OCI-LY7 (cell line): ENCODE measurements at regions of chr10 and their contacts with region 1.

Region 1: DNA sequence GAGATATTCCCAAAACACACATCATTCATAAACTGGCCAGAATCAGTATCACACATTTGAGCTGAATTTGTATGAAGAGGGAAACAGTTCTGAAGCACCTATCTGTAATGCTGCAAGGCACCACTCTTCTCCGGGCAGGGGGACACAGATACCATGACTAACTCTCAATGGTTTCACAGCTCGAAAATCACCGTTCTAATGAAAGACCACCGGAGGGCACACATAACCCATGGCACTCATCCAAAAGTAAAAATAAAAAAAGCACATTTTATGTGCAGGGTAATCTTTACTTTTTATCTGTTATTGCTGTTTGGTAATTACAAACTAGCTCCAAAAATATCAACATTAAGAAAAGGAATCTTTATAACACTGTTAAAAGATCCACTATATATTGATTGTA is 137.5 kb downstream of the PARD3 start:
- DNase-seq: no peak
- H3K4me3 ChIP-seq: no peak overlapping the region
- H3K27ac ChIP-seq: no peak overlapping the region
- H3K4me1 ChIP-seq: no peaks in the 10 kb centered on the region
- CTCF ChIP-seq: peak; percentile 37; the same call in 1 of the 2 replicates

Region 2: GRCh38 chr10:34655286-34656170 is 22.1 kb before region 1 on chr10:
- CTCF ChIA-PET with region 1: no interaction called
- POLR2A ChIA-PET with region 1: no interaction called
- intact Hi-C with region 1: loop called (anchors 1 kb)
- DNase-seq: peak; percentile 59
- H3K4me3 ChIP-seq: no peak overlapping the region
- H3K27ac ChIP-seq: no peak overlapping the region
- H3K4me1 ChIP-seq: no peaks in the 10 kb centered on the region
- CTCF ChIP-seq: peak; percentile 84

Region 3: GRCh38 chr10:34689053-34689452 is 11.5 kb after region 1 on chr10:
- CTCF ChIA-PET with region 1: no interaction called
- POLR2A ChIA-PET with region 1: no interaction called
- intact Hi-C with region 1: no loop called
- DNase-seq: no peak
- H3K4me3 ChIP-seq: no peak overlapping the region
- H3K27ac ChIP-seq: no peak overlapping the region
- H3K4me1 ChIP-seq: no peaks in the 10 kb centered on the region
- CTCF ChIP-seq: no peak